Tibial artery (tissue), 4 donors: ENCODE measurements at regions of chr11 and their contacts with region 1.

Region 1: GRCh38 chr11:33362051-33362910 is 105.1 kb downstream of the HIPK3 start:
- DNase-seq: no peak
- H3K4me3 ChIP-seq: no peak overlapping the region
- H3K27ac ChIP-seq: no peak overlapping the region
- H3K4me1 ChIP-seq: peaks cover 0 to 6% (median 0%) of the 10 kb centered on the region in 4 donors
- H3K27me3 ChIP-seq: no peaks in the 10 kb centered on the region
- CTCF ChIP-seq: peak; percentile 61 to 69

Region 2: DNA sequence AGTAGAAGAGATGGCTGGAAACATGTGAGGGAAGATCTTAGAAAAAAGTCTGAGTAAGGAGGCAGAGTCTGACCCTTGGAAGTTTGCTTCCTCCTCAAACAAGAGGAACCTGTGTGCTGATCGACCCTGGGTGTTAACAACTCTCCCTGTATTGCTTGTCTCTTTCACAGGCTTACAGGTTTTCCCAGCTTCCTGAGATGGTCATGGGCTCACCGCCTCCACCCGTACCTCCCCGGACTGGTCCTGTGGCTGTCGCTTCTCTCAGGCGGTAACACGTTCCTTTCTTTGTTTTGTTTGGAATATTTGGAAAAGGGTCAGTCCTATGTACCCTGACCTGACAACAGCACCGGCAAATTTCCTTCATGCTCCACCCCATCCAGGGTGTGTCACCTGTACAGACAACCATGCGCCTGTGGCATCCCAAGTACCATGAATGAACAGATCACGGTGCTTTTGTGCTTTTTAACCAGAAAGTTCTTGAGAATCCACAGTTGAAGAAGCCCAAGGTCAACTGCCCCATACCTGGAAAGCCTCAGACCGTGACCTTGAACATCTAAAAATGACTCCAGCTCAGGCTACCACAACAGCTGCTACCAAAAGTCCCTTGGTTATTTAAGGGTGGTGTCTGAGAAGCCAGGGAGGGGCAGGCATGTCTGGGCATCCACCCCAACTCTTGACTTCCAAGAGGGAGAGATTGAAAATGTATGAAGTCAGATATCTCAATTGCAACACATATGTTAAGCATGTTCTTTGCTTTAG is 293.7 kb after region 1 on chr11:
- intact Hi-C with region 1: no loop called
- DNase-seq: no peak
- H3K4me3 ChIP-seq: no peak overlapping the region
- H3K27ac ChIP-seq: no peak overlapping the region
- H3K4me1 ChIP-seq: peaks cover 0 to 16% (median 11%) of the 10 kb centered on the region in 4 donors
- H3K27me3 ChIP-seq: no peaks in the 10 kb centered on the region
- CTCF ChIP-seq: no peak

Region 3: DNA sequence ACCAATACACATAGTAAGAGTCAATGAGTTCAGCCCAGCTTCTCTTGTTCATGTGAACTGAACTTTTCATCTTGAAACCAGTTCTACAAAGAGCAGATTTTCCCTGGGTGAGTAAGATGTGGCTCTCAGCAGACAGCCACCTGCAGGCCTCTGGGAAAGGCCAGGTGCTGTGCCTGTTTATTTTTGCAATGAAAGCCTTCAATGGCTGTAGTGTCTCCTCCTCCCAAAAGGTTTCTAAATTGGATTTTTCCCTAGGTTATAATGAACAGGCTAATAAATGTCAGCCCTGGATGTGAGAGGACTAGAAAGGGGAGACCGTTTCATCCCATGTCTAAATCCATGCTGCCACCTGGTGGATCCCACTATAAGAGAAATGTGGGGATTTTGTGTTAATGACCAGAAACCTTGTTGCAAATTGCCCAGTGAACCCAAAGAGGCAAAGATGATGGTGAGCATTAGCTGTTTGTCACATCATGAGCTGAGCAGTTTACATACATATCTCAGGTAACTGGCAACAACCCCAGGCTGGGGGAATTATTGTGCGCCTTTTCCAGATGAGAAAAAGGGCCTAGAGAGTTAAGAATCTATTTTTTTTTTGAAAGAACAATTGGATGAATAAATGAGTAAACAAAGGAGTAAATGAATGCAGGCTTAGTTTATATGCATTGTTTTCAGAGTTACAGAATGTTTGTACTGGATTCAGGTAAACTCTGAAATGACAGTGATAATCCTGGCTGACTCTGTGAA is 325.6 kb after region 1 on chr11:
- intact Hi-C with region 1: loop called (anchors 10 kb)
- DNase-seq: peak in 1 of 2 donors; percentile 44
- H3K4me3 ChIP-seq: no peak overlapping the region
- H3K27ac ChIP-seq: no peak overlapping the region
- H3K4me1 ChIP-seq: peaks cover 0 to 35% (median 24%) of the 10 kb centered on the region in 4 donors
- H3K27me3 ChIP-seq: peaks cover 0 to 9% of the 10 kb centered on the region in 2 donors
- CTCF ChIP-seq: peak; percentile 44 to 47

Region 4: GRCh38 chr11:33736148-33736809 is 374.0 kb after region 1 on chr11 and contains the start of gene CD59:
- intact Hi-C with region 1: loop called (anchors 5 kb)
- DNase-seq: peak; percentile 96 to 98
- H3K4me3 ChIP-seq: peak within 1 kb of the TSS; percentile 61 to 78
- H3K27ac ChIP-seq: peak within 1 kb of the TSS; percentile 86 to 89
- H3K4me1 ChIP-seq: peaks cover 0 to 41% (median 27%) of the 10 kb centered on the region in 4 donors
- H3K27me3 ChIP-seq: no peaks in the 10 kb centered on the region
- CTCF ChIP-seq: no peak

Region 5: GRCh38 chr11:33829433-33830141 is 467.3 kb after region 1 on chr11:
- intact Hi-C with region 1: loop called (anchors 5 kb)
- DNase-seq: peak in 1 of 2 donors; percentile 58
- H3K4me3 ChIP-seq: peak overlapping the region; percentile 33 to 46
- H3K27ac ChIP-seq: no peak overlapping the region
- H3K4me1 ChIP-seq: peaks cover 0 to 13% (median 9%) of the 10 kb centered on the region in 4 donors
- H3K27me3 ChIP-seq: peaks cover 0 to 38% of the 10 kb centered on the region in 2 donors
- CTCF ChIP-seq: peak; percentile 77 to 78